B cell (primary cell): ENCODE measurements at regions of chr7 and their contacts with region 1.

Region 1: GRCh38 chr7:130069978-130070860 is at the start of gene KLHDC10:
- DNase-seq: peak; percentile 97
- ATAC-seq: peak; percentile 93
- H3K4me3 ChIP-seq: peak within 1 kb of the TSS; percentile 68 to 90 (median 69)
- H3K4me3 Mint-ChIP-seq: peak within 1 kb of the TSS; percentile 89
- H3K27ac ChIP-seq: peak within 1 kb of the TSS; percentile 75 to 84
- H3K27ac Mint-ChIP-seq: peak within 1 kb of the TSS; percentile 88
- H3K4me1 ChIP-seq: peaks cover 22 to 24% of the 10 kb centered on the region in 2 donors
- H3K4me1 Mint-ChIP-seq: peaks cover 36% of the 10 kb centered on the region
- H3K27me3 ChIP-seq: no peaks in the 10 kb centered on the region
- H3K27me3 Mint-ChIP-seq: no peaks in the 10 kb centered on the region
- CTCF ChIP-seq: no peak
- total RNA-seq, gene KLHDC10: 25.3 and 25.7 TPM in 2 replicates

Region 2: GRCh38 chr7:129611246-129612111 is 458.7 kb before region 1 on chr7 and contains the start of gene NRF1:
- CTCF ChIA-PET with region 1: no interaction called
- POLR2A ChIA-PET with region 1: no interaction called
- intact Hi-C with region 1: loop called (anchors 1 kb)
- DNase-seq: peak; percentile 96
- ATAC-seq: peak; percentile 87
- H3K4me3 ChIP-seq: peak within 1 kb of the TSS; percentile 70 to 97 (median 84)
- H3K4me3 Mint-ChIP-seq: peak within 1 kb of the TSS; percentile 97
- H3K27ac ChIP-seq: peak within 1 kb of the TSS; percentile 91 to 93
- H3K27ac Mint-ChIP-seq: peak within 1 kb of the TSS; percentile 97
- H3K4me1 ChIP-seq: peaks cover 47 to 53% of the 10 kb centered on the region in 2 donors
- H3K4me1 Mint-ChIP-seq: peaks cover 67% of the 10 kb centered on the region
- H3K27me3 ChIP-seq: no peaks in the 10 kb centered on the region
- H3K27me3 Mint-ChIP-seq: no peaks in the 10 kb centered on the region
- CTCF ChIP-seq: no peak
- total RNA-seq, gene NRF1: 49.2 and 53.0 TPM in 2 replicates

Region 3: DNA sequence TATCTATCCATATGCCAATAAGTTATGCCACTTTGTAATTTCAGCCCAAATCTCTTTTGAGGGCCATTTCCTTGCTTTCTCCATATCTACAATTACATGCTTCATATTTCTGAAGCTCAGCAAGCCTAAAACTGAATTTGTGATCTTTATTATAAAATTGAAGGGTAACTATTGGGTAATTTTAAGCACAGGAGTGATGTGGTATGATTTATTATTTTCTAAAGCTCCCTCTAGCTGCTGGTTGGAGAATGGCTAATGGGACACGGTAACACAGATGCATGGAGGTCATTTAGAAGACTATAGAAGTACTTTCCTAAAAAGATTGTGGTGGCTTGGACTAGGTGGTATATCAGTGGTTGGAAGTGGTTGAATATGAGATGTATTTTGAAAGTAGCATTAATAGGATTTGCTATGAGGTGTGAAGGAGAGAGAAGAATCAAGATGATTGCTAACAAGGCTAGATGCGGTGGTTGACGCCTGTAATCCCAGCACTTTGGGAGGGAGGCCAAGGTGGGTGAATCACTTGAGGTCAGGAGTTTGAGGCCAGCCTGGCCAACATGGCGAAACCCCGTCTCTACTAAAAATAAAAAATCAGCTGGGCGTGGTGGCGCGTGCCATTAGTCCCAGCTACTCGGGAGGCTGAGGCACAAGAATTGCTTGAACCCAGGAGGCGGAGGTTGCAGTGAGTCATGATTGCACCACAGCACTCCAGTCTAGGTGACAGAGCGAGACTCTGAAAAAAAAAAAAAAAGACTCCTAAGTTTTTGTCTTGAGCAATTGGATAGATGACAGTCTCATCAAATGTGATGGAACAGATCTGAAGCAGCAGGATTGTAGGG is 14.0 kb after region 1 on chr7:
- CTCF ChIA-PET with region 1: interaction called, 19 read pairs
- POLR2A ChIA-PET with region 1: no interaction called
- intact Hi-C with region 1: no loop called
- DNase-seq: peak; percentile 19
- ATAC-seq: no peak
- H3K4me3 ChIP-seq: no peak overlapping the region
- H3K4me3 Mint-ChIP-seq: no peak overlapping the region
- H3K27ac ChIP-seq: no peak overlapping the region
- H3K27ac Mint-ChIP-seq: no peak overlapping the region
- H3K4me1 ChIP-seq: no peaks in the 10 kb centered on the region
- H3K4me1 Mint-ChIP-seq: peaks cover 26% of the 10 kb centered on the region
- H3K27me3 ChIP-seq: no peaks in the 10 kb centered on the region
- H3K27me3 Mint-ChIP-seq: no peaks in the 10 kb centered on the region
- CTCF ChIP-seq: peak; percentile 65

Region 4: DNA sequence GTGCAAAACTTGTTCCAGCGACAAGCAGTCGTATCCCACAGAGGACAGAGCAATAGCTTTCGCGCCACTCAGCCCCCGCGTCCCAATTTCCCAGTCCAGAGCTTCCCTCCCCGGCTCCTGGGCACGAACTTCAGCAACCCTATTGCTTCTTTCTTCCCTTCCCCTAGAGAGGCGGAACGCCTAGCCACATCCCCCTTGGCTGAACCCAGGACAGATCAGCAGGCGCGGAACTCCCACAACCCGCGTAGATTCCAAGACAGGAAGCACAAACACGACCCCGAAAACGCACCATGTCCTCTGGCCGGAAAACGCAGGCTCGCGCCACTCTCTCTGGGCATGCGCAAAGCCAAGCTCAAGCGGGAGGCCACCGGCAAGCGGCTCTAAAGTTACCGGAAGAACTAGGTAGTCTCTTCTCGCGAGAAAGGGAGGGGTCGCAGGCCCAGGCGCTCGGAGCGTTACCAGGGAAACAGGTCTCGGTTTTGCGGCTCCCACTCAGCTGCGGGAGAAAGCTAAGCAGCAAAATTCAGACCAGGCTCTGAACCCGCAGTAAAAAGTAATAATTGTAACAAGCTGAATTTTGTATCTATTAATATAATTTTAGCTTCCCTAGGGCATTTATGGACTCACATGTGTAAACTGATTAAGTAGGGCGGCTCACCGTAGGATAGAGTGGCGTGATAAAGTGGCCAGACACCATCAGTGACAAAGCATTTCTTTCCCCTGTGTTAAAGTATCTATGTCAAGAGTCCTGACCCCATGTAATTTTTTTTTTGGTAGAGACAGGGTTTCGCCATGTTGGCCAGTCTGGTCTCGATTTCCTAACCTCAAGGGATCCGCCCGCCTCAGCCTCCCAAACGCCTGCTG is 135.1 kb after region 1 on chr7 and contains the start of gene TMEM209:
- CTCF ChIA-PET with region 1: interaction called, 9 read pairs
- POLR2A ChIA-PET with region 1: interaction called, 12 read pairs
- intact Hi-C with region 1: loop called (anchors 1 kb)
- DNase-seq: peak; percentile 96
- ATAC-seq: peak; percentile 97
- H3K4me3 ChIP-seq: peak within 1 kb of the TSS; percentile 83 to 100 (median 89)
- H3K4me3 Mint-ChIP-seq: peak within 1 kb of the TSS; percentile 97
- H3K27ac ChIP-seq: peak within 1 kb of the TSS; percentile 86 to 87
- H3K27ac Mint-ChIP-seq: peak within 1 kb of the TSS; percentile 96
- H3K4me1 ChIP-seq: peaks cover 4 to 14% of the 10 kb centered on the region in 2 donors
- H3K4me1 Mint-ChIP-seq: peaks cover 15% of the 10 kb centered on the region
- H3K27me3 ChIP-seq: no peaks in the 10 kb centered on the region
- H3K27me3 Mint-ChIP-seq: peaks cover 6% of the 10 kb centered on the region
- CTCF ChIP-seq: no peak
- total RNA-seq, gene TMEM209: 33.2 and 35.8 TPM in 2 replicates

Region 5: DNA sequence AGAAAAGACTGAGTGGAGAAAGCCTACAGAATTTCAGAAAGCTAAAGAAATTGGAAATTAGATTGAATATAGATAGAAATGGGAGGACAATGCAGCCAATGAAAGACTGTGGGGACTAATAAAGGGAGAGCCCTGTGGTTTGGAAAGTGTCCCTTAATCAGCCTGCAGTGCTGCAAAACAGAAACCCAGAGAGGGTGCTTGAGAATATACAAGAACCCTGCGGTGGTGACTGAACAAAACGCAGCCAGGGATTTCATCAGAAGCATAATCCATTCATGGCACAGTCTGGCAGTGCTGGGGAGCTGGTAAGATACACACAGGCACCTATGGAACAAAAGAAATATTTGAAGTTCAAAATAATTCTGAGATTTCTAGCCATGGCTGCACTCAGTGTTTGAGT is 351.5 kb after region 1 on chr7:
- CTCF ChIA-PET with region 1: no interaction called
- POLR2A ChIA-PET with region 1: no interaction called
- intact Hi-C with region 1: no loop called
- DNase-seq: no peak
- ATAC-seq: no peak
- H3K4me3 ChIP-seq: no peak overlapping the region
- H3K4me3 Mint-ChIP-seq: no peak overlapping the region
- H3K27ac ChIP-seq: no peak overlapping the region
- H3K27ac Mint-ChIP-seq: no peak overlapping the region
- H3K4me1 ChIP-seq: no peaks in the 10 kb centered on the region
- H3K4me1 Mint-ChIP-seq: no peaks in the 10 kb centered on the region
- H3K27me3 ChIP-seq: no peaks in the 10 kb centered on the region
- H3K27me3 Mint-ChIP-seq: no peaks in the 10 kb centered on the region
- CTCF ChIP-seq: no peak

Region 6: GRCh38 chr7:130560970-130561369 is 490.8 kb after region 1 on chr7:
- CTCF ChIA-PET with region 1: no interaction called
- POLR2A ChIA-PET with region 1: no interaction called
- intact Hi-C with region 1: loop called (anchors 2 kb)
- DNase-seq: peak; percentile 53
- ATAC-seq: peak; percentile 60
- H3K4me3 ChIP-seq: no peak overlapping the region
- H3K4me3 Mint-ChIP-seq: no peak overlapping the region
- H3K27ac ChIP-seq: no peak overlapping the region
- H3K27ac Mint-ChIP-seq: no peak overlapping the region
- H3K4me1 ChIP-seq: no peaks in the 10 kb centered on the region
- H3K4me1 Mint-ChIP-seq: peaks cover 4% of the 10 kb centered on the region
- H3K27me3 ChIP-seq: no peaks in the 10 kb centered on the region
- H3K27me3 Mint-ChIP-seq: no peaks in the 10 kb centered on the region
- CTCF ChIP-seq: no peak

Region 7: DNA sequence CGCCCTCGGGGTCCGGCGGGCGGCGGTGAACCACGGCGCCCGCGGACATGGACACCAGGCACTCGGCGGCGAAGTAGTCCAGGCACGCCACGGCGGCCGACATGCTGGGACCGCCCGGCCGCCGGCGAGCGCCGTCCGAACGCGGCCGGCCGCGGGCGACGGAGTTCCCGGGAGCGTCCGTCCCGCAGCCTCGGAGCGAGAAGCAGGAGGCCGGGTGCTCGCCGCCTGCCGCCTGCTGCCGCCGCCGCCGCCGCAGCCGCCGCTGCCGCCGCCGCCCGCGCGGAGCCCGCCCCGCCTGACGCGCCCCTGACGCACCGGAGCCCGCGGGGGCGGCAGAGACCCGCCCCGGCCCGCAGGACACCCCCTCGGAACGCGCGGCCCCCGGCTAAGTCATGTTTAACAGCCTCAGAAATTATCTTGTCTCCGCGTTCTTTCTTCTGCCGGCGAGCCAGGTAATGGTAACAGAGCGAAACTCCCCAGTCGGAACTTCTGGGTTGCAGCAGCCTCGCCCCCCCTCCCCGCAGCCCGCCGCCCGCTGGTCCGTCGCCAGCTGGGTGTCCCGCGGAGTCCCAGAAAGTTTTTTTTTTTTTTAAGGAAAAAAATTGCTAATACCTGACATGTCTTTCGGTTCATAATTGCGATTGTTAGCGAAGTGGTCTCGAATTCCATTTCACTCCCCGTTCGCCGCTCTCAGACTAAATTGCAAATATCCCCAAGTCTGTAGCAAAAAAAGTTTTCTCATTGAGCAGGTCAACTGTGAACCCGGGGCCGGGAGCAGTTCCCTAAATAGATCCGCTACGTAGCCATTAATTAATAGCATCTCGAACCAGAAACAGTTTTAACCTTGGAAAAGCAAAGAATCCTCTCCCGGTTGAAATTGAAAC is 664.0 kb after region 1 on chr7 and contains the start of gene KLF14:
- CTCF ChIA-PET with region 1: interaction called, 3 read pairs
- POLR2A ChIA-PET with region 1: no interaction called
- intact Hi-C with region 1: loop called (anchors 1 kb)
- DNase-seq: peak; percentile 77
- ATAC-seq: peak; percentile 64
- H3K4me3 ChIP-seq: peak within 1 kb of the TSS; percentile 45 to 82 (median 64)
- H3K4me3 Mint-ChIP-seq: peak within 1 kb of the TSS; percentile 90
- H3K27ac ChIP-seq: peak within 1 kb of the TSS in 1 of 2 donors; percentile 40
- H3K27ac Mint-ChIP-seq: peak within 1 kb of the TSS; percentile 73
- H3K4me1 ChIP-seq: peaks cover 9 to 16% of the 10 kb centered on the region in 2 donors
- H3K4me1 Mint-ChIP-seq: peaks cover 10% of the 10 kb centered on the region
- H3K27me3 ChIP-seq: peaks cover 0 to 65% (median 54%) of the 10 kb centered on the region in 4 experiments
- H3K27me3 Mint-ChIP-seq: peaks cover 72% of the 10 kb centered on the region
- CTCF ChIP-seq: no peak
- total RNA-seq, gene KLF14: 0.19 and 0.27 TPM in 2 replicates

Region 8: DNA sequence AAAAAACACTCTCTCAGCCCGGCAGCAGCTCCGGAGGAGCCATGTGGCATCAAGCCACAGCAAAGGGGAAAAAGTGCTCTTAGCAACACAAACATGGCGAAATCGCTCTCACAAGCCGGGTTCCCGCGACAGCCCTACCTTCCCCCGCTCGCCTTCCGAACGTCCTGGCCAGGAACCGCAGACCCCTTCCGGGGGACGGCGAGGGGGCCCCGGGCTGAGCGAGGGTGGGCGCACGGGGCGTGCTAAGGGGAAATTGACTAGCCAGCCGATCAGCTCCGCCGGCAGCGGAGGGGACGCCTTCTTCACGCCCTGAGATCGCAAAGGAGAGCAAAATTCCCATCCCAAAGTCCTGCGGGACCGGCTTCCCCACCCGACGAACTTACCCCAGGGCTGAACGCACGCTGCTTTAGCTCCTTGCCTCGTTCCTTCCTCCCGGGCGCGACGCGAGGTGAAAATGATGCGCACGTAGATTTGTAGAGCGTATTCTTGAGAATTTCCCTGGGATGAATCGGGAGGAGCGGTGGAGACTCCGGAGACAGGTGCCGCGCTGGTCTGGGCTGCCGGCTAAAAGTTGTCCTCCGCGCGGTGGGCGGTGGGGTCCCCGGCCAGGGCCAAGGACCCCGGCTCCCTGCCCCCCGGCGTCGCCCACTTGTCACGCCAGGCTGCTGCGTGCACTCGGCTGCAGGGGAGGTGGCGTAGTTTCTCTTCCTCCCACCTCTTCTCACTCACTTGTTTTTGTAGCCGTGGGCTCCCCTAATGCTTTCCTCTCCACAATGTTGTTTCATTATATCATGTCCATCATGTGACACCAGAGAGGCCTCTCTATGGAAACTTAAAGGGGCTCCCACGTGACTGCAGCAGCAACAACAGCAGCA is 1037.4 kb after region 1 on chr7:
- CTCF ChIA-PET with region 1: no interaction called
- POLR2A ChIA-PET with region 1: no interaction called
- intact Hi-C with region 1: loop called (anchors 5 kb)
- DNase-seq: peak; percentile 94
- ATAC-seq: peak; percentile 44
- H3K4me3 ChIP-seq: peak overlapping the region; percentile 85 to 100 (median 98)
- H3K4me3 Mint-ChIP-seq: peak overlapping the region; percentile 85
- H3K27ac ChIP-seq: peak overlapping the region; percentile 95 to 98
- H3K27ac Mint-ChIP-seq: peak overlapping the region; percentile 91
- H3K4me1 ChIP-seq: peaks cover 71 to 75% of the 10 kb centered on the region in 2 donors
- H3K4me1 Mint-ChIP-seq: peaks cover 72% of the 10 kb centered on the region
- H3K27me3 ChIP-seq: no peaks in the 10 kb centered on the region
- H3K27me3 Mint-ChIP-seq: no peaks in the 10 kb centered on the region
- CTCF ChIP-seq: no peak